ENCODE measurements at regions of chr2 and their contacts with region 1.

Region 1: DNA sequence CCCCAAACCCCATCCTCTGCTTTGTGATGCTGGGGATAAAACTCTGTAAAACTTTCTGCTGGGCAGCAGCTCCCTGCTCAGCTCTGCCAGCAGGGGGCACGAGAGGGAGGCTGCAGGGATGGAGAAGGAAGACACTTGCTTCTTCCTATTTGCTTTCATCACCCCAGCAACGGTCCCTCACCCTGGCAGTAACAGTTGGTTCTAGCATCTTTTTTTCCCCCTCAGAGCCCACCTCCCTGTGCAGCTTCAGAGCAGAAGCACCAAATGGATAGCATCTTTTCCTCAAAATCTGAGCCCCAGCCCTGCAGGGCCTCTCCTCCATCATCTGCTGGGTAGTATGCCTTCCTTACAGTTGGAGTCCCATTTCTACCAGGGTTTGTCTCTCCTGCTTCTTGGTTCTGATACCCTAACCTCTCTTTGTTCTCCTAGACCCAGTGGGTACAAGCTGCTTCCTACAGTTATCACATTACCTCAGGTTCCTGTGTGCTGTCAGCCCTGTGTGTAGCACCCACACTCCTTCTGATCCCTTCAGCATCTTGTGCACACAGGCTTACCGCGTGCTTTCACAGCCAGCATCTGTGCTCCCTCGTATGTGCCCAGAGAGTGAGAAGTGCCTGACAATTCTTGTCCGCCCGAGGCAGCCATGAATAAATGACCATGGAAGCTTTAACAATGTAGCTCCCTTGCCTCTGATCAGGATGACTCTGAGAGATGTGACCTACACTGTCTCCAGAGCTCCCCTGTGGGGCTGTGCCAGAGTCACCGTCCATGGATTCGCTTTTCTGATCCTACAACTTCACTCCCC is 14.5 kb downstream of the CKAP2L start:
- DNase-seq: peak; percentile 58 to 74
- ATAC-seq: peak; percentile 97 to 98
- H3K4me3 ChIP-seq: no peak overlapping the region
- H3K27ac ChIP-seq: peak overlapping the region in 1 of 2 experiments; percentile 44; a peak in 1 of 6 replicates
- H3K4me1 ChIP-seq: peaks cover 17% of the 10 kb centered on the region
- CTCF ChIP-seq: peak; percentile 97
- EP300 ChIP-seq: no peak
- POLR2A ChIP-seq: no peak
- RAD21 ChIP-seq: peak; percentile 86 to 88

Region 2: DNA sequence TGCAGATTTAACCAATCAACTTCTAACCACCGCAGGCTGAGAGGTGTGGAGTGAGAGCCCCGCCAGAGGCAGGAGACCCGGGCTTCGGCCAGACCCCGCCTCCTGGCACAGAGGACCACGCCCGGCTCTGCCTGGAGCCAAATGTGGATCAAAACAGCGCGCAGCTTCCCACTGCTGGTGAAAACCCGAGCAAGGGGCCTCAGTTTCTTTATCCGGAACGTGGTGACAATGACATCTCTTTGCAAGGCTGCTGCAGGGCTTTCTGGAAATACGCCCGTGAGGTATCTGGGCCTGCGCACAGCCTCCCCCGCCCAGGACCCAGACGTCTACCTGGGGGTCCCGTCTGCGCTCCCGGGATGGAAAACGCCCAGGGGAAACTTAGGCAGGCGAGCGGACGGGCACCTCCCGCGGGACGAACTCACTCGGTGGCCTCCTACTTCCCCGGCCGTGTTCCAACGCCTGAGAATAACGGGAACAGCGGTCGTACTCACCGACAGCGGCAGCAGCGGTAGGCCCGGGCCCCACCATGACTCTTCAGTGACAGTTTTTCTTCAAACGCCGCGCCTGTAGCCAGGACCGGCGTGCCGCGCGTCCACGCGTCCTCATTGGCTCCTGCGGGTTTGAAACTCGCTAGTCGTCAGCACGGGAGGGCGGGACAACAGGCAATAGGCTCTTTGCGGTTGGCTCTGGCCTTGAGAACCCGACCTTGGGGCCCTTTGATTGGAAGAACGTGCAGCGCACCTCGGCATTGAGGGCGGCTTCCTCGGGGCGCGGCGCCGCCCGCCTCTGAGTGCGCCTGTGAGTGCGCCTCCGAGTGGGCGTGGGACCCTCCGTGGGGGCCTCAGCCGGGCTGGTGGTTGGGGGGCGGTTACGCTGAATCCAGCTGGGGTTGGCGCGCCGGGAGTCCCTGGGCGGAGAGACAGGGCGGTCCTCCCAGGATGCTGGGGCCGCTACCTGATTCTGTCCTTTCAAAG is 14.4 kb after region 1 on chr2 and contains the start of gene CKAP2L:
- CTCF ChIA-PET with region 1: interaction called, 30 read pairs
- POLR2A ChIA-PET with region 1: no interaction called
- DNase-seq: peak; percentile 96 to 98
- ATAC-seq: peak; percentile 99
- H3K4me3 ChIP-seq: peak within 1 kb of the TSS; percentile 75
- H3K27ac ChIP-seq: peak within 1 kb of the TSS; percentile 75 to 86
- H3K4me1 ChIP-seq: peaks cover 29% of the 10 kb centered on the region; the same call in 2 of the 3 replicates
- CTCF ChIP-seq: no peak
- EP300 ChIP-seq: no peak
- POLR2A ChIP-seq: no peak
- RAD21 ChIP-seq: no peak
- polyA plus RNA-seq, gene CKAP2L: 11.3 and 14.0 TPM in 2 replicates

Region 3: GRCh38 chr2:112836695-112837117 is 86.7 kb after region 1 on chr2 and contains the start of gene IL1B:
- CTCF ChIA-PET with region 1: interaction called, 11 read pairs
- POLR2A ChIA-PET with region 1: no interaction called
- DNase-seq: peak in 1 of 2 experiments; percentile 16
- ATAC-seq: peak; percentile 55 to 59; a peak in 5 of 6 replicates
- H3K4me3 ChIP-seq: no peak within 1 kb of the TSS
- H3K27ac ChIP-seq: 0 out of 6 replicates have a peak within 1 kb of the TSS, but pooled peaks of 1 of the 2 experiments have one; percentile 15
- H3K4me1 ChIP-seq: peaks cover 21% of the 10 kb centered on the region
- CTCF ChIP-seq: no peak
- EP300 ChIP-seq: no peak
- POLR2A ChIP-seq: no peak
- RAD21 ChIP-seq: no peak
- polyA plus RNA-seq, gene IL1B: 0.70 and 0.98 TPM in 2 replicates

Region 4: DNA sequence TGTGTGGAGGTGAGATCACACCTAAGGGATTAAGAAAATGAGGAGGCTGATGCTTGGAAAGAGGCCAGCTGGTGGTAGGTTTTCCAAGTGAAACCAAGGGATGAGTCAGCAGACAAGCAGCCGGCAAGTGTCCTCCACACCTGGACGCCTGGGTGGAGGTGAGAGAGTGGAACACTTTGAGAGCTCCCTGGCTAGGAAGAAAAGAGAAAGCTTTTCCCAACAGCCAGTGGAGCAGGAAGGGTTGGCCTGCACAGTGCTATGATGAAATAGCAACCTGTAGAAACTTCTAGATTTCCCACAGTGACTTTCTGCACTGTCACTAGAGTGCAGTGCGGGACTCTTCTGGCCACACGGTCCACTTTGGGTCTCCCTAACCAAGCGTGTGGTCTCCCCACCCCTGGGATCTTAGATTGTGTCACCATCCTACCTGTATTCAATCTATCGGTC is 141.5 kb after region 1 on chr2:
- CTCF ChIA-PET with region 1: interaction called, 31 read pairs
- POLR2A ChIA-PET with region 1: no interaction called
- DNase-seq: no peak
- ATAC-seq: no peak
- H3K4me3 ChIP-seq: no peak overlapping the region
- H3K27ac ChIP-seq: no peak overlapping the region
- H3K4me1 ChIP-seq: no peaks in the 10 kb centered on the region
- CTCF ChIP-seq: no peak
- EP300 ChIP-seq: no peak
- POLR2A ChIP-seq: no peak
- RAD21 ChIP-seq: no peak

Region 5: DNA sequence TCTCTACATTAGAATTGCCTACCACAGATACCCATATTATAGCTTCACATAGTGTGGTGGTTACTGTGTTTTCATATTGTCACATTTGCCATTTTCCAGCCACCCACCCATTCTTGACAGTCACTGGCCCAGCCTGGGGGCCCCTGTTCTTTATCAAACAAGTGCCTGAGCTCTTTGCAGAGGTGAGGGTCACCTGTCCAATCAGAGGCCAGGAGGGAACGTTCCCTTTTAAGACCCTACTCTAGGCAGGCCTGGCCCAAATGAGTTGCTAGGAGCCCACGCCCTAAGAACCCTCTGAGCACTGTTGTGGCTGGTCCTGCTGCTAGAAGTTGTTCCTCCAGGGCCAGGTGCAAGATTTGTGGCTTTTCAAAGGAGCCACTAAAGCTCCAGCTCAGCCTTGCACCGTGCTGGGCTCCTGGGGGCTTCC is 166.2 kb after region 1 on chr2:
- CTCF ChIA-PET with region 1: interaction called, 13 read pairs
- POLR2A ChIA-PET with region 1: no interaction called
- DNase-seq: no peak
- ATAC-seq: no peak
- H3K4me3 ChIP-seq: no peak overlapping the region
- H3K27ac ChIP-seq: no peak overlapping the region
- H3K4me1 ChIP-seq: no peaks in the 10 kb centered on the region
- CTCF ChIP-seq: no peak
- EP300 ChIP-seq: no peak
- POLR2A ChIP-seq: no peak
- RAD21 ChIP-seq: no peak

Region 6: GRCh38 chr2:112958428-112959108 is 208.6 kb after region 1 on chr2:
- CTCF ChIA-PET with region 1: interaction called, 35 read pairs
- POLR2A ChIA-PET with region 1: no interaction called
- DNase-seq: peak; percentile 48 to 60
- ATAC-seq: peak; percentile 82 to 96
- H3K4me3 ChIP-seq: no peak overlapping the region
- H3K27ac ChIP-seq: no peak overlapping the region
- H3K4me1 ChIP-seq: no peaks in the 10 kb centered on the region
- CTCF ChIP-seq: peak; percentile 82
- EP300 ChIP-seq: no peak
- POLR2A ChIP-seq: no peak
- RAD21 ChIP-seq: peak; percentile 67 to 72

Region 7: GRCh38 chr2:113105047-113105785 is 355.3 kb after region 1 on chr2:
- CTCF ChIA-PET with region 1: no interaction called
- POLR2A ChIA-PET with region 1: no interaction called
- DNase-seq: peak; percentile 26 to 36
- ATAC-seq: peak; percentile 76 to 83; a peak in 5 of 6 replicates
- H3K4me3 ChIP-seq: no peak overlapping the region
- H3K27ac ChIP-seq: peak overlapping the region in 1 of 2 experiments; percentile 34; a peak in 1 of 6 replicates
- H3K4me1 ChIP-seq: no peaks in the 10 kb centered on the region
- CTCF ChIP-seq: no peak
- EP300 ChIP-seq: no peak
- POLR2A ChIP-seq: no peak
- RAD21 ChIP-seq: no peak

Measured in A549 (cell line).